HEK293 (cell line): ENCODE measurements at regions of chrX and their contacts with region 1.

Region 1: GRCh38 chrX:24054182-24055042 is at the start of gene EIF2S3:
- H3K4me3 ChIP-seq: peak within 1 kb of the TSS; percentile 39
- H3K27ac ChIP-seq: peak within 1 kb of the TSS; percentile 98
- H3K4me1 ChIP-seq: no peaks in the 10 kb centered on the region
- CTCF ChIP-seq: peak; percentile 88

Region 2: GRCh38 chrX:23907498-23908218 is 146.8 kb before region 1 on chrX and contains the starts of genes APOO and CXorf58:
- CTCF ChIA-PET with region 1: interaction called, 16 read pairs
- POLR2A ChIA-PET with region 1: interaction called, 12 read pairs
- H3K4me3 ChIP-seq: peak within 1 kb of the TSS; percentile 58
- H3K27ac ChIP-seq: peak within 1 kb of the TSS; percentile 88
- H3K4me1 ChIP-seq: 0 out of 2 replicates have a peak, but pooled peaks cover 3% of the 10 kb centered on the region
- CTCF ChIP-seq: peak; percentile 89

Region 3: DNA sequence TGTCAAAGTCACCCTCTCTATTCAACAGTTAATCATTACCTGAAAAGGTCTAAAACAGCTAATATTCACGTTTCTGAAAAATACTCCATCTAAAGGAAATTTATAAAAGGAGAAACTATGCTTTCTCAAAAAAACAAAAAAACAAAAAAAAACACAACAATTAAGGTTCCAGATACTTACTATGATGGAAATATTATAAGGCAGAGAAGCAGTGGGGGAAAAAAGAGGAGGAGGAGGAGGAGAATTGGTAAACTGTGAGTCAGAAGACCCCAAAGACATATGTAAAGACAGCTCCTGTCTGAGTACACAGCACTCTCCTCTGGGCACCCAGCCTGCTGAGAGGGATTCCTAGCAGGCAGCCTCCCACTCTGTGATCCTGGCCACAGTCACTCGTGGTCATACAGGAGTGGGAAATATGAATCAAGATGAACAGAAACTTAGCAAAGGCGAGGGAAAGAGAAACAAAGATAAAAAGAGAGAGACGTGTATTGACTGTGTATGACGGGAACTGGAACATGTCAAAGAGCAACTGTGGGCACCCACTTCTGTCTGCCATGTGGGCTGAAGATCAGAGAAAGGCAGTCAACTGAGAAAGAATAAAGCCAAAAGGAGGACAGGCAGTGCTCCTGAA is 39.9 kb before region 1 on chrX:
- CTCF ChIA-PET with region 1: interaction called, 7 read pairs
- POLR2A ChIA-PET with region 1: interaction called, 10 read pairs
- H3K4me3 ChIP-seq: no peak overlapping the region
- H3K27ac ChIP-seq: no peak overlapping the region
- H3K4me1 ChIP-seq: peaks cover 1% of the 10 kb centered on the region; the same call in 1 of the 2 replicates
- CTCF ChIP-seq: no peak

Region 4: GRCh38 chrX:24024819-24025740 is 29.3 kb before region 1 on chrX:
- CTCF ChIA-PET with region 1: interaction called, 18 read pairs
- POLR2A ChIA-PET with region 1: interaction called, 66 read pairs
- H3K4me3 ChIP-seq: peak overlapping the region; percentile 75
- H3K27ac ChIP-seq: peak overlapping the region; percentile 96
- H3K4me1 ChIP-seq: no peaks in the 10 kb centered on the region
- CTCF ChIP-seq: 0 out of 2 replicates have a peak, but pooled peaks have one; percentile 10

Region 5: GRCh38 chrX:24069877-24070276 is 15.5 kb after region 1 on chrX:
- CTCF ChIA-PET with region 1: interaction called, 17 read pairs
- POLR2A ChIA-PET with region 1: interaction called, 24 read pairs
- H3K4me3 ChIP-seq: no peak overlapping the region
- H3K27ac ChIP-seq: no peak overlapping the region
- H3K4me1 ChIP-seq: no peaks in the 10 kb centered on the region
- CTCF ChIP-seq: no peak

Region 6: DNA sequence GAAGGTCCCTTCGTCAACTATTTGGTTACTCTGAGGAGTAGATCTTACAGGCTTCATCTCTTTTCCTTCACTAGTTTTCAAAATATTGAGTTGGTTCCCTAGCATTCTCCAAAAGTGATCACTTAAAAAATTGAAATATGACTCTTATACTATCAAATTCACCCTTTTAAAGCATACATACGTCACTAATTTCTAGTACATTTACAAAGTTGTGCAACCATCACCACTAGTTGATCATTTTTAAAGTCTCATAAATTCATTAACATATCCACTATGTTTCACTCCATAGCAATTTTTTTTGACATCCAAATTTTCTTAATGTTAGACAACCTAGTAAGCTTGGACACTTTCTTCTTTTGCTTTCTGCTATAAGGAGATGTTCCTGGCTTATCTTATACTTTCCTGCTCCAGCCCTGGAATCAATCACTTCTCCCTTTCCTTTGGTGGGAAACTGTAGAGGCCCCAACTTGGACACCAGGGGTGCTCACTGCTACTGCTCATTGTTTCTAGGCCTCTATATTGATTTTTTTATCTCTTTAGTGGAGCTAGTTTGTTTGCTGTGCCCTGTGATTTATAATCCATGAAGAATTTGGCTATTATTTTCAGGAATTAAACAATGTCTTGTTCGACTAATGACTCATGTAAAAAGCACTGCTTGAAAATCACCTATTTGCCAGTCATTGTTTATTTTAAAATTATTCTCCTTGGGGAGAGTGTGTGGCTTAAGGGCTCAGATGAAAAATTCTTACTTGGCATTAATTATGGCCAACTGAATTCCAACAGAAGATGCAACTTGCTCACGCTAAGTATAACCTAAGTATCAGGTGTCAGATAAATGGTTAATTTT is 91.2 kb after region 1 on chrX:
- CTCF ChIA-PET with region 1: interaction called, 9 read pairs
- POLR2A ChIA-PET with region 1: interaction called, 15 read pairs
- H3K4me3 ChIP-seq: no peak overlapping the region
- H3K27ac ChIP-seq: peak overlapping the region; percentile 100
- H3K4me1 ChIP-seq: peaks cover 34% of the 10 kb centered on the region
- CTCF ChIP-seq: no peak